GM12878 (cell line): ENCODE measurements at regions of chr11 and their contacts with region 1.

Region 1: GRCh38 chr11:83971063-83971462 is 684.9 kb upstream of the CCDC90B start:
- DNase-seq: peak; percentile 11
- ATAC-seq: peak; percentile 49
- H3K4me3 ChIP-seq: no peak overlapping the region
- H3K27ac ChIP-seq: peak overlapping the region; percentile 24; the same call in 1 of the 2 replicates
- H3K4me1 ChIP-seq: peaks cover 6% of the 10 kb centered on the region; the same call in 1 of the 2 replicates
- H3K27me3 ChIP-seq: no peaks in the 10 kb centered on the region
- CTCF ChIP-seq: no peak; a peak in 1 of 6 replicates
- EP300 ChIP-seq: no peak
- POLR2A ChIP-seq: no peak
- RAD21 ChIP-seq: no peak

Region 2: GRCh38 chr11:83285771-83286528 is 685.1 kb before region 1 on chr11 and contains the start of gene CCDC90B:
- CTCF ChIA-PET with region 1: no interaction called
- POLR2A ChIA-PET with region 1: no interaction called
- RAD21 ChIA-PET with region 1: no interaction called
- SMC1A ChIA-PET with region 1: no interaction called
- in situ Hi-C with region 1: no loop called
- intact Hi-C with region 1: loop called (anchors 10 kb)
- DNase-seq: peak; percentile 96
- ATAC-seq: peak; percentile 93
- H3K4me3 ChIP-seq: peak within 1 kb of the TSS; percentile 78
- H3K27ac ChIP-seq: peak within 1 kb of the TSS; percentile 96
- H3K4me1 ChIP-seq: peaks cover 21% of the 10 kb centered on the region
- H3K27me3 ChIP-seq: no peaks in the 10 kb centered on the region
- CTCF ChIP-seq: peak in 2 of 3 experiments; percentile 30 to 75; a peak in 3 of 6 replicates
- EP300 ChIP-seq: 0 out of 4 replicates have a peak, but pooled peaks of 1 of the 2 experiments have one; percentile 42
- POLR2A ChIP-seq: peak; percentile 96
- RAD21 ChIP-seq: no peak
- polyA plus RNA-seq, gene CCDC90B: 76.2 to 82.8 TPM

Region 3: DNA sequence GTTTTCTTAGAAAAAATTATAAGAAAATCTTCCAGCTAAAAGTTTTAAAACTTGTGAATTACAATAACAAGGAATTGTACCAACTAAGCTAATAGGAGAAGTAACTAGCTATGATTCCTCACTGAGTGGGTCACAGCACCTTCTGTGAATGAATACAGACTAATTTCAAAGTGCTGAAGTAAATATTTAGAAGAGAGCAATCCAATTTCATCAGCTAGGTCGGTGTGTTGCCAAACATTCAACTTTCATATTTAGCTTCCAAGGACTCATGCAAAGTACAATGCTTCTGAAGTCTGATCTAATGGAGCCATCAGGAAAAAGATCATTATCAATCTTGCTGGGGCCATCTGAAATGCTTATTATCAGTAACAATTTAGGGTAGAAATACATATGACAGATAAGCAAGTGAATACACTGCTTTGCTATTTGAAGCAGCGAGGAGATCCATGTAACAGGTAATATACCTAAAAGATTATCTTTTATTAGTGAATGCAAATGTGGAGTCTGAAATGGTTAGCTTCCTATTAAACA is 65.7 kb after region 1 on chr11:
- CTCF ChIA-PET with region 1: no interaction called
- POLR2A ChIA-PET with region 1: no interaction called
- RAD21 ChIA-PET with region 1: no interaction called
- SMC1A ChIA-PET with region 1: no interaction called
- in situ Hi-C with region 1: no loop called
- intact Hi-C with region 1: no loop called
- DNase-seq: no peak
- ATAC-seq: no peak
- H3K4me3 ChIP-seq: no peak overlapping the region
- H3K27ac ChIP-seq: no peak overlapping the region
- H3K4me1 ChIP-seq: no peaks in the 10 kb centered on the region
- H3K27me3 ChIP-seq: no peaks in the 10 kb centered on the region
- CTCF ChIP-seq: no peak
- EP300 ChIP-seq: no peak
- POLR2A ChIP-seq: no peak
- RAD21 ChIP-seq: no peak

Region 4: DNA sequence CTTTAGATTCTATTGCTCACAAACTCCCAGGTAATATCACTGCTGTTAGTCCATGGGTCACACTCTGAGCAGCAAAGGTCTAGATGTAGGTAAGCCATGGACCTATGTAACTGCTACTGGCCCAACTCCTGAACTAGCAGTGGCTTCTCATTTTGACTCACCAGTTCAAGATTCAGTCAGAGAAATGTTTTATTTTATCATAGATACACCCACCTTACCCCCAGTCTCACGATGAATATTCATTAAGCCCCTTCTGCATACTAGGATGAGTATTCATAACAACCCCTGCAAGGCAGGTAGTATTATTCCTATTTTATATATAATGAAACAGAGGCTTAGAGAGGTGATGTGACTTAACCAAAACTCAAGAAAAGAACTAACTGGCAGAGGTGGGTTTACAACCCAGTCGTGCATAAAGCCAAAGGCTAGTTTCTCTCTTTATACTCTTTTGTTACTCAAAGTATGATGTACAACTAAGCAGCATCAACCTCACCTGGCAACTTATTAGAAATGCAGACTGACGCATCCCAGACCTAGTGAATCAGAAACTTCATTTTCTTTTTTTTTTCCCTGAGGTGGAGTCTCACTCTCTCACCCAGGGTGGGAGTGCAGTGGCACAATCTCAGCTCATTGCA is 272.7 kb after region 1 on chr11:
- CTCF ChIA-PET with region 1: no interaction called
- POLR2A ChIA-PET with region 1: no interaction called
- RAD21 ChIA-PET with region 1: no interaction called
- SMC1A ChIA-PET with region 1: no interaction called
- in situ Hi-C with region 1: no loop called
- intact Hi-C with region 1: loop called (anchors 5 kb)
- DNase-seq: no peak
- ATAC-seq: peak; percentile 77
- H3K4me3 ChIP-seq: no peak overlapping the region
- H3K27ac ChIP-seq: no peak overlapping the region
- H3K4me1 ChIP-seq: no peaks in the 10 kb centered on the region
- H3K27me3 ChIP-seq: no peaks in the 10 kb centered on the region
- CTCF ChIP-seq: no peak
- EP300 ChIP-seq: no peak
- POLR2A ChIP-seq: no peak
- RAD21 ChIP-seq: no peak

Region 5: GRCh38 chr11:84289381-84289906 is 318.4 kb after region 1 on chr11:
- CTCF ChIA-PET with region 1: no interaction called
- POLR2A ChIA-PET with region 1: no interaction called
- RAD21 ChIA-PET with region 1: no interaction called
- SMC1A ChIA-PET with region 1: no interaction called
- in situ Hi-C with region 1: no loop called
- intact Hi-C with region 1: loop called (anchors 2 kb)
- DNase-seq: peak; percentile 55
- ATAC-seq: peak; percentile 99
- H3K4me3 ChIP-seq: peak overlapping the region; percentile 26; the same call in 1 of the 2 replicates
- H3K27ac ChIP-seq: peak overlapping the region; percentile 67; the same call in 1 of the 2 replicates
- H3K4me1 ChIP-seq: peaks cover 15% of the 10 kb centered on the region
- H3K27me3 ChIP-seq: no peaks in the 10 kb centered on the region
- CTCF ChIP-seq: no peak
- EP300 ChIP-seq: peak in 1 of 2 experiments; percentile 89; a peak in 2 of 4 replicates
- POLR2A ChIP-seq: no peak
- RAD21 ChIP-seq: no peak